Activated CD4-positive, alpha-beta T cell treated with anti-CD3 and anti-CD28 coated beads, Interleukin-2, amount 10 ng/mL, durations not matched to agents 24 days and 14 days (primary cell): ENCODE measurements at regions of chr3 and their contacts with region 1.

Region 1: GRCh38 chr3:57227204-57227929 is at the start of gene APPL1:
- DNase-seq: peak; percentile 98
- H3K4me3 Mint-ChIP-seq: peak within 1 kb of the TSS; percentile 91
- H3K27ac Mint-ChIP-seq: peak within 1 kb of the TSS; percentile 87
- H3K4me1 Mint-ChIP-seq: peaks cover 18% of the 10 kb centered on the region
- H3K27me3 Mint-ChIP-seq: no peaks in the 10 kb centered on the region
- total RNA-seq, gene APPL1: 40.4 and 44.8 TPM in 2 replicates

Region 2: GRCh38 chr3:56693750-56694149 is 533.6 kb before region 1 on chr3:
- intact Hi-C with region 1: loop called (anchors 10 kb)
- DNase-seq: peak; percentile 62
- H3K4me3 Mint-ChIP-seq: peak overlapping the region; percentile 65
- H3K27ac Mint-ChIP-seq: peak overlapping the region; percentile 34
- H3K4me1 Mint-ChIP-seq: peaks cover 35% of the 10 kb centered on the region
- H3K27me3 Mint-ChIP-seq: no peaks in the 10 kb centered on the region

Region 3: GRCh38 chr3:57100046-57100695 is 127.2 kb before region 1 on chr3:
- intact Hi-C with region 1: loop called (anchors 5 kb)
- DNase-seq: peak; percentile 89
- H3K4me3 Mint-ChIP-seq: no peak overlapping the region
- H3K27ac Mint-ChIP-seq: no peak overlapping the region
- H3K4me1 Mint-ChIP-seq: no peaks in the 10 kb centered on the region
- H3K27me3 Mint-ChIP-seq: peaks cover 8% of the 10 kb centered on the region

Region 4: DNA sequence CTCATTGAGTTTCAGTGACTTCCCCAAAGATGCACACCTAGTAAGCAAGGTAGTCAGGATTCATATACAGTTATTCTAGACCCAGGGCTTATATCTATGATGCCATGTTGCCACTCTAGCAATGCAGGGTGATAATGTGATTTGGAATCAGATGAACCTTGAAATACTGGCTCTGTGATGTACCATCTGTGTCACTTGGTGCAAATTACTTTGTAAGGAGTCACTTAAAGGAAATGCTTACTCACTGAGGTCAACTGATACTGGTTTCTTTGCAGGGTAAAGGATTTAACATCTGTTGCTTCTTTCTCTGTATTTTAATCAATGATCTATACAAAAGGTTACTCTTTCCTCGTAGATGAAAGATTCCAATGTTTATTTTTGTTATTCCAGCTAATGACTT is 54.3 kb after region 1 on chr3:
- intact Hi-C with region 1: no loop called
- DNase-seq: no peak
- H3K4me3 Mint-ChIP-seq: no peak overlapping the region
- H3K27ac Mint-ChIP-seq: no peak overlapping the region
- H3K4me1 Mint-ChIP-seq: no peaks in the 10 kb centered on the region
- H3K27me3 Mint-ChIP-seq: peaks cover 2% of the 10 kb centered on the region

Region 5: GRCh38 chr3:57555738-57556458 is 328.5 kb after region 1 on chr3 and contains the start of gene PDE12:
- intact Hi-C with region 1: loop called (anchors 5 kb)
- DNase-seq: peak; percentile 94
- H3K4me3 Mint-ChIP-seq: peak within 1 kb of the TSS; percentile 79
- H3K27ac Mint-ChIP-seq: peak within 1 kb of the TSS; percentile 97
- H3K4me1 Mint-ChIP-seq: peaks cover 32% of the 10 kb centered on the region
- H3K27me3 Mint-ChIP-seq: no peaks in the 10 kb centered on the region
- total RNA-seq, gene PDE12: 34.4 TPM in 2 replicates

Region 6: DNA sequence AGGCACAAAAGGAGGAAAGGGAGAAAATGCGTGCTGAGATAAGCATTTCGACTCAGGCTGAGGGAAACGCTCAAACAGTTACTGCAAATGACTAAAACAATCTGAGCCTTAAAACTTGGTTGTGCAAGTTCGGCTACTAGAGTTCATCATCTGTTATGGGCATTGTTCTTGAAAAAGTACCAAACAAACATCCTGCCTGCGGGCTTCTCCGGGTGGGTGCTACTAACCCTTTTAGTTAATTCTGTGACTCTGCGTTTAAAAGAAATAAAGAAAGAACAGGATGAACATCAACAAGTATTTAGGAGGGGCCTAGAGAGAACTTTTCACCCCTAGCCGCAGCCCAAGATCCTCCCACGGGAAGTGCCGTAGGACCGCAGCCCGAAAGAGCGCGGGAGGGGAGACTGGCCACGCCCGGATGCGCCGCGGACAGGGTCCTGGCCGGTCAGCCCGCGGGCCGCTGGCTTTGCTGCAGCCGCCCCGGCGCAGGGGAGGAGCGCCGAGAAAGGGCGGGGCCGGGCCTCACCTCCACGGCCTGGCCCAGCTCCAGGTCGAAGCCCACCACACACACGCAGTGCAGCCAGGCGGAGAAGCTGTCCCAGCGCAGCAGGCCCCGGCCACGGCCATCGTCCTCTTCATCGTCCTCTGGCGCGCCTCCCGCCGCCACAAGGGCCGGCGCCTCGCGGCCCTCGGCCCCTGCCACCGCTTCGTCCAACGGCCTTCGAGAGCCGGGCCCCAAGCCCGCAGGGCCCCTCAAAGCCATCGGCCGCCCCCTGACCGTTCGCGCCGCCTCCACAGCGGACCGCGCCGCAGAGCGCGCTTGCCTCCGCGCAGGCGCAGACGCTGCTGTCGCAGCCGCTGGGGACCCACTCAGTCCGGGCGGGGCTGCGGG is 465.1 kb after region 1 on chr3 and contains the start of gene DENND6A:
- intact Hi-C with region 1: loop called (anchors 5 kb)
- DNase-seq: peak; percentile 98
- H3K4me3 Mint-ChIP-seq: peak within 1 kb of the TSS; percentile 87
- H3K27ac Mint-ChIP-seq: peak within 1 kb of the TSS; percentile 96
- H3K4me1 Mint-ChIP-seq: peaks cover 22% of the 10 kb centered on the region
- H3K27me3 Mint-ChIP-seq: no peaks in the 10 kb centered on the region
- total RNA-seq, gene DENND6A: 20.8 and 25.2 TPM in 2 replicates